ENCODE measurements at regions of chr17 and their contacts with region 1.

Region 1: GRCh38 chr17:74493381-74493833 is 27.0 kb downstream of the CD300A start:
- H3K4me3 Mint-ChIP-seq: no peak overlapping the region
- H3K27ac Mint-ChIP-seq: no peak overlapping the region
- H3K4me1 Mint-ChIP-seq: peaks cover 57% of the 10 kb centered on the region
- H3K27me3 Mint-ChIP-seq: peaks cover 2% of the 10 kb centered on the region

Region 2: GRCh38 chr17:74379495-74380085 is 113.8 kb before region 1 on chr17:
- intact Hi-C with region 1: loop called (anchors 1 kb)
- H3K4me3 Mint-ChIP-seq: no peak overlapping the region
- H3K27ac Mint-ChIP-seq: no peak overlapping the region
- H3K4me1 Mint-ChIP-seq: peaks cover 12% of the 10 kb centered on the region
- H3K27me3 Mint-ChIP-seq: peaks cover 33% of the 10 kb centered on the region

Region 3: GRCh38 chr17:74457146-74457819 is 36.1 kb before region 1 on chr17:
- intact Hi-C with region 1: loop called (anchors 5 kb)
- H3K4me3 Mint-ChIP-seq: no peak overlapping the region
- H3K27ac Mint-ChIP-seq: no peak overlapping the region
- H3K4me1 Mint-ChIP-seq: peaks cover 57% of the 10 kb centered on the region
- H3K27me3 Mint-ChIP-seq: peaks cover 20% of the 10 kb centered on the region

Region 4: GRCh38 chr17:74467221-74467951 is 26.0 kb before region 1 on chr17:
- intact Hi-C with region 1: loop called (anchors 2 kb)
- H3K4me3 Mint-ChIP-seq: no peak overlapping the region
- H3K27ac Mint-ChIP-seq: no peak overlapping the region
- H3K4me1 Mint-ChIP-seq: peaks cover 53% of the 10 kb centered on the region
- H3K27me3 Mint-ChIP-seq: no peaks in the 10 kb centered on the region

Region 5: DNA sequence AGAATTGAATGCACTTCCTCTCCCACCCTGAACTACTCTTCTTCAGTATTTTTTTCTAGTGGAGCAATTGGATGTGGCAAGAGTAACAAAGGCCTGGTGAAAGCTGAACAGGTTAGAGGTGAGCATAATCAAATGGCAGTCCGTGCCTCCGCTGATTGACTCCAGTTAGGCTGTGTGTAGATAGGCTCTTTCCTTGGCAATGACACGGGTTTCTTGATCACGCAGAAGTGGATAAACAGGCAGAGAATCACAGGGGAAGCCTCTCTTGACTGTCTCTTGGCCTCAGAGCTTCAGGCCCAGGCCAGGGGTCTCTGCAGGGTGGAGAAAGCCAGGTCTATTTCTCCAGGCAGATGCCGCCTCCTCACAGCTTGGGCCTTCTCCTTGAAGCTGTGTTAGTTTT is 33.7 kb after region 1 on chr17:
- intact Hi-C with region 1: no loop called
- H3K4me3 Mint-ChIP-seq: no peak overlapping the region
- H3K27ac Mint-ChIP-seq: peak overlapping the region; percentile 83
- H3K4me1 Mint-ChIP-seq: peaks cover 94% of the 10 kb centered on the region
- H3K27me3 Mint-ChIP-seq: no peaks in the 10 kb centered on the region

Region 6: DNA sequence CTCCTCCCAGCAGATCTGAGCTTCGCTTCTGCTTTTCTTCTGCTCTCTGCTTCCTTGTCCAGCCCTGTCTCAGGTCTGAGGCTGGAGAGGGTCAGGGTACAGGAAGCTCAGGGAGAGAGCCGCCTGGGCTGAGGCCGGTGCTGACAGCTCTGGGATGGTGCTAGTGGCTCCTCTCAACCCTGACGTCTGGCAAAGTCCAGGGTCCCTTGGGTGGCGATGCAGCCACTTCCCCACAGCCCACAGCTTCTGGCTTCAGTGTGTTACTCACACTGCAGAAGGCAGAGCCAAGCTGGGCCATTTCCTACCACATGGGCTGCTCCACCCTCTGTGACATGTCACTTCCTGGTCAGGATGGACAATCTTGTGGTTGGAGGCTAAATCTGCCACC is 52.4 kb after region 1 on chr17 and contains the start of gene CD300C:
- intact Hi-C with region 1: no loop called
- H3K4me3 Mint-ChIP-seq: peak within 1 kb of the TSS; percentile 69
- H3K27ac Mint-ChIP-seq: peak within 1 kb of the TSS; percentile 93
- H3K4me1 Mint-ChIP-seq: peaks cover 82% of the 10 kb centered on the region
- H3K27me3 Mint-ChIP-seq: peaks cover 13% of the 10 kb centered on the region